ENCODE measurements at regions of chr18 and their contacts with region 1.

Region 1: GRCh38 chr18:74597662-74598349 is at the start of gene ZNF407:
- DNase-seq: peak; percentile 75 to 93 (median 83)
- ATAC-seq: peak; percentile 76
- H3K4me3 ChIP-seq: peak within 1 kb of the TSS; percentile 87
- H3K4me3 Mint-ChIP-seq: peak within 1 kb of the TSS; percentile 98
- H3K27ac ChIP-seq: peak within 1 kb of the TSS; percentile 96 to 98
- H3K27ac Mint-ChIP-seq: peak within 1 kb of the TSS; percentile 100
- H3K4me1 ChIP-seq: peaks cover 25% of the 10 kb centered on the region
- H3K4me1 Mint-ChIP-seq: peaks cover 71% of the 10 kb centered on the region
- H3K27me3 ChIP-seq: no peaks in the 10 kb centered on the region
- H3K27me3 Mint-ChIP-seq: no peaks in the 10 kb centered on the region
- CTCF ChIP-seq: no peak
- total RNA-seq, gene ZNF407: 23.2 to 24.7 TPM

Region 2: GRCh38 chr18:74147779-74148542 is 449.8 kb before region 1 on chr18 and contains the starts of genes FBXO15 and TIMM21:
- CTCF ChIA-PET with region 1: no interaction called
- POLR2A ChIA-PET with region 1: no interaction called
- intact Hi-C with region 1: loop called in 1 of 2 experiments (anchors 5 kb)
- DNase-seq: peak; percentile 90 to 99 (median 96)
- ATAC-seq: peak; percentile 83
- H3K4me3 ChIP-seq: peak within 1 kb of the TSS; percentile 83
- H3K4me3 Mint-ChIP-seq: peak within 1 kb of the TSS; percentile 96
- H3K27ac ChIP-seq: peak within 1 kb of the TSS; percentile 95 to 99
- H3K27ac Mint-ChIP-seq: peak within 1 kb of the TSS; percentile 99
- H3K4me1 ChIP-seq: peaks cover 25% of the 10 kb centered on the region
- H3K4me1 Mint-ChIP-seq: peaks cover 58% of the 10 kb centered on the region
- H3K27me3 ChIP-seq: no peaks in the 10 kb centered on the region
- H3K27me3 Mint-ChIP-seq: no peaks in the 10 kb centered on the region
- CTCF ChIP-seq: no peak
- total RNA-seq, gene FBXO15: 0.58 to 1.0 TPM
- total RNA-seq, gene TIMM21: 10.7 to 11.8 TPM

Region 3: GRCh38 chr18:74353169-74353775 is 244.5 kb before region 1 on chr18:
- CTCF ChIA-PET with region 1: no interaction called
- POLR2A ChIA-PET with region 1: no interaction called
- intact Hi-C with region 1: loop called in 1 of 2 experiments (anchors 10 kb)
- DNase-seq: peak; percentile 35 to 85 (median 52)
- ATAC-seq: peak; percentile 88
- H3K4me3 ChIP-seq: no peak overlapping the region
- H3K4me3 Mint-ChIP-seq: no peak overlapping the region
- H3K27ac ChIP-seq: no peak overlapping the region
- H3K27ac Mint-ChIP-seq: no peak overlapping the region
- H3K4me1 ChIP-seq: peaks cover 2% of the 10 kb centered on the region
- H3K4me1 Mint-ChIP-seq: peaks cover 5% of the 10 kb centered on the region
- H3K27me3 ChIP-seq: no peaks in the 10 kb centered on the region
- H3K27me3 Mint-ChIP-seq: no peaks in the 10 kb centered on the region
- CTCF ChIP-seq: peak; percentile 85

Region 4: GRCh38 chr18:74623047-74623816 is 25.4 kb after region 1 on chr18:
- CTCF ChIA-PET with region 1: interaction called, 3 read pairs
- POLR2A ChIA-PET with region 1: interaction called, 7 read pairs
- intact Hi-C with region 1: loop called in 1 of 2 experiments (anchors 2 kb)
- DNase-seq: peak in 12 of 14 experiments; percentile 19 to 65 (median 38)
- ATAC-seq: peak; percentile 39
- H3K4me3 ChIP-seq: no peak overlapping the region
- H3K4me3 Mint-ChIP-seq: no peak overlapping the region
- H3K27ac ChIP-seq: no peak overlapping the region
- H3K27ac Mint-ChIP-seq: no peak overlapping the region
- H3K4me1 ChIP-seq: peaks cover 17% of the 10 kb centered on the region
- H3K4me1 Mint-ChIP-seq: peaks cover 20% of the 10 kb centered on the region
- H3K27me3 ChIP-seq: no peaks in the 10 kb centered on the region
- H3K27me3 Mint-ChIP-seq: no peaks in the 10 kb centered on the region
- CTCF ChIP-seq: peak; percentile 79

Region 5: DNA sequence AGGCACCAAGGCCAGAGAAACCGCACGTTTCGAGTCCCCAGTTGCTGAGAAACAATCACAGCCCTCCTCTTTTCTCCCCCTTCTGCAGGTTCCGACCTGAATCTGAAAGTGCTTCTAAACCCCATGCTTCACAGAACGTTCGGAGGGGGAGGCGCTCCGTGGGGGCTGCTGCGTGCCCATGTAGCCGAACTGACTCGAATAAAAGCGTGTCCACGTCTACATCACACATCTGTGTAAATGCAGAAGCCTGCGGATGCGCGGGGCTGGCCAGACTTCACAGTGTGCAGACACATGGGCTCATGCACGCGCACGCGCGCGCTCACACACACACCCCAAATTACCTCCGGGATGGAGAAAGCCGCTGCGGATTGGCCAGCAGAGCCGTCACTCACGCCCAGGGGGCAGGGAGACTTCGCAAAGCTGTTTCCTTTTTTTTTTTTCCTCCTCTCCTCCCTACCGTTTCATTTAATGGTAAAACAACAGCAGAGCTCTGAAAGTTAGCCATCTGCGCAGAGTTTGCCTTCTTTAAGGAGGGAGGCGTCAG is 1894.9 kb after region 1 on chr18:
- CTCF ChIA-PET with region 1: no interaction called
- POLR2A ChIA-PET with region 1: no interaction called
- intact Hi-C with region 1: loop called (anchors 10 kb)
- DNase-seq: peak; percentile 96 to 100 (median 98)
- ATAC-seq: peak; percentile 68
- H3K4me3 ChIP-seq: peak overlapping the region; percentile 60
- H3K4me3 Mint-ChIP-seq: peak overlapping the region; percentile 95
- H3K27ac ChIP-seq: peak overlapping the region in 1 of 2 donors; percentile 37
- H3K27ac Mint-ChIP-seq: peak overlapping the region; percentile 82
- H3K4me1 ChIP-seq: peaks cover 36% of the 10 kb centered on the region
- H3K4me1 Mint-ChIP-seq: peaks cover 65% of the 10 kb centered on the region
- H3K27me3 ChIP-seq: peaks cover 13 to 24% of the 10 kb centered on the region in 2 experiments
- H3K27me3 Mint-ChIP-seq: peaks cover 82% of the 10 kb centered on the region
- CTCF ChIP-seq: no peak

Measured in CD4-positive, alpha-beta T cell (primary cell).